Body of pancreas (tissue), 4 donors: ENCODE measurements at regions of chr12 and their contacts with region 1.

Region 1: DNA sequence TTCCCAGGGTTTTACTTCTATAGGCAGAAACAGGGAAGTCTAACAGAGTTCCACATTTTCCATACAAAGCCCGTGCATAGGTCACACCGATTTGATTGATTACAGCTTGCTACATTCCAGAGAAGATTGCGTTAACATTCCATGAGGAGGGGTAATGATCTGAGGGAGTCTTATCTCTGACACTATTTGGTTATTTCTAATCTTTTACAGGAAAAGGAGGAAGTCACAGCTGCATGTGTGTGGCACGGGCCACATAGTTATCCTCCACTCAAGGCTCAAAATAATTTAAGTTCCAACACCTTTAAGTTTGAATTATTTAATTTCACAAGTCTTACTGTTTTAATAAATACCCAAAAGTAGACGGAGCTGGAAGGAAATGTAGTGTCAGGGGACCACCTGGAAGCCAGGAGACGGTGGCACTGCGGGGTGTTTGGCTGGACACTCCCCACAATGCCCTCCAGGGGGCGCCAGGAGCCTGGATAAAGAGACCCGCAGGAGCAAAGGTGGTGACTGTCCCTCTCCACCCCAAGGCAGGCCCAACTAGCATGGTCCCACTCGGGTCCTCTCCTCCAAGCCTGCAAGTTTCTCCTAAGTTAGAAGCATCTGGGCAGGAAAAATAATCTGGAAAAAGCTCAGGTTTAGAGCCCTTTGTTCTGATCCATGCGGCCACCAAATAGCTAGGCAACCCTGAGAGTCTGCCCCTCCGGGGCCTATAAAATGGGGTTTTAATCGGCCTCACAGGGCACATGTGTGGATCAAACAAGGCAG is 20.2 kb downstream of the KRT8 start:
- DNase-seq: peak; percentile 84 to 90 (median 88)
- ATAC-seq: peak; percentile 87
- H3K4me3 ChIP-seq: no peak overlapping the region
- H3K27ac ChIP-seq: peak overlapping the region; percentile 56 to 84 (median 70)
- H3K4me1 ChIP-seq: peaks cover 26% of the 10 kb centered on the region
- H3K27me3 ChIP-seq: no peaks in the 10 kb centered on the region
- CTCF ChIP-seq: peak; percentile 86 to 99 (median 96)
- POLR2A ChIP-seq: peak in 1 of 3 donors; percentile 8

Region 2: GRCh38 chr12:52691076-52691840 is 193.5 kb before region 1 on chr12:
- intact Hi-C with region 1: no loop called
- DNase-seq: peak in 2 of 4 donors; percentile 21 to 31
- ATAC-seq: no peak
- H3K4me3 ChIP-seq: no peak overlapping the region
- H3K27ac ChIP-seq: no peak overlapping the region
- H3K4me1 ChIP-seq: peaks cover 7% of the 10 kb centered on the region
- H3K27me3 ChIP-seq: no peaks in the 10 kb centered on the region
- CTCF ChIP-seq: no peak
- POLR2A ChIP-seq: no peak

Region 3: DNA sequence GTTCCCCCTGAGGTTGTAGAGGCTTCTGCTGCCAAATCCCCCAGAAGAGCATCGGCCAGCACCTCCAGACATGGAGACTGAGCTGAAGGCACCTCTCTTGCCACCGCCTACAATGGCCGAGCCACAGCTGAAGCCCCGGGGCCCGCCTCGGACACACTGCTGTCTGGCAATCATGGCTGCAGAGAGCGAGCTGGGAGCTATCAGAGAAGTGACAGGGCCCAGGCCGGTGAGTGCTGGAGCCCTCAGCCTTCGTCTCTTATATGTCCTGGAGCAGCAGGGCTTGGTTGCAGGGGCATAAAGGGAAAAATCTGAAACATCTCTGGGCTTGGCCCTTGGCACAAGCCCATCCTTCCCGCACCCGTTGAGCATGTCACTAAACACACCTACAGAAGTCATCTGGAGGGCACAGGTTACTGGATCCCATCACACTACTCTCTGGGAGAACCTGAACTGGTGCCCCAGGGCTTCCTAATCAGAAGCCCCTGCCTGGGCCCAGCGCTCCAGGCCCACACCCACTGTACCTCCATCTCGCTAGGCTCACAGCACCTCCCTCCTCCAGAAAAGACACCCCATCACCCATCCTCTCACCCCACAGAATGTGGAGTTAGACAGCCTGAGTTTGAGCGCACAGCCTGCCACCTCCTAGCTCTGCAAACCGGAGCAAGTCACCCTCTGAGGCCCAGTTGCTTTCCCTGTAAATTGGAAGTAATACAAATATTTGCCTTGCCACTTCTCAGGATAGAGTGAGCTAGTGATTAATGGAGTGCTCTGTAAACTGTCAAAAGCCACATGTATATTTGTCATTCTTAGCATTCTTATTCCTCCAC is 70.6 kb before region 1 on chr12 and contains the start of gene KRT4:
- intact Hi-C with region 1: no loop called
- DNase-seq: no peak
- ATAC-seq: peak; percentile 58
- H3K4me3 ChIP-seq: no peak within 1 kb of the TSS
- H3K27ac ChIP-seq: no peak within 1 kb of the TSS
- H3K4me1 ChIP-seq: peaks cover 9% of the 10 kb centered on the region
- H3K27me3 ChIP-seq: no peaks in the 10 kb centered on the region
- CTCF ChIP-seq: no peak
- POLR2A ChIP-seq: no peak
- total RNA-seq, gene KRT4: 0.52 TPM in 1 of 2 donors, not detected in the other

Region 4: DNA sequence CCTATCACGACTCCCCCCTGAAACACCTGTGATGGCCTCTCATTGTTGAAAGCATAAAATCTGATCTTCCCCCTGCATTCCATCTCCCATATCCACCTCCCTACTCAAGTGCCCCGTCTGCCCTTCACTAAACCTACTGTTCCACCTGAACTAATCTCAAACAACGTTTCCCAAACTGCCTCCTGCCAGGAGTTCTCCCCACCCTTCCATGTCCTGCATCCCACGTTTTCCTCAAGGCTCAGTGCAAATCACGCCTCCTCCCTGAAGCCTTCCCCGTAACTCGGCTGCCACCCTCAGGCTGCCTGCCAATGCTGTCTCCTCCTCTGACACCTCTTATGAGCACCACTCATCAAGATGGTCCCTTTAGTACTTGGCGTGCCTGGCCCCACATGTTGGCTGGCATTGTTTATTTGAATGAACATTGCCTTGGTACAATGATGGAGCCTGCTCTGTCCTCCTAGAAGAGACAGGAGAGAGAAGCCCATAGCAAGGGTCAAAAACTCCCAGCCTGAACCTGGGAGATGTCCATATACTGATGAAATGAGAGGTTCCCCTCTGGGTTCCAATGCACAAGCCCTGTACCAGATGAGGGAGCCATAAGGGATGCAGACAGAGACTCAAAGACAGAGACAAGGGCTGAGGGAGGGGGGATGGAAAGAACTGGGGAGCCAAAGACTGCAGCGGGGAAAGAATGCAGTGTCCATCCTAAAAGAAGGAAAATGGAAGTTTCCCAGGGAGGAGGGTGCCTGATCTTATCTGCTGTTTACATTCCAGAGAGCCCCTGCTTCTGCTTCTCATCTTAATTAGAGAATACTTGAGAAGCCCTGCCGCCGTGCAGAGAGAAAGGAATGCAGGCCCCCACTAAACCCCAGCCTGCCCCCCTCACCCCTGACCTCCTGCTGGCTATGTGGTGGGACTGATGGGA is 91.7 kb after region 1 on chr12:
- intact Hi-C with region 1: loop called (anchors 5 kb)
- DNase-seq: peak in 1 of 4 donors; percentile 13
- ATAC-seq: no peak
- H3K4me3 ChIP-seq: no peak overlapping the region
- H3K27ac ChIP-seq: no peak overlapping the region
- H3K4me1 ChIP-seq: peaks cover 44% of the 10 kb centered on the region
- H3K27me3 ChIP-seq: no peaks in the 10 kb centered on the region
- CTCF ChIP-seq: peak in 1 of 7 experiments; percentile 13
- POLR2A ChIP-seq: no peak

Region 5: DNA sequence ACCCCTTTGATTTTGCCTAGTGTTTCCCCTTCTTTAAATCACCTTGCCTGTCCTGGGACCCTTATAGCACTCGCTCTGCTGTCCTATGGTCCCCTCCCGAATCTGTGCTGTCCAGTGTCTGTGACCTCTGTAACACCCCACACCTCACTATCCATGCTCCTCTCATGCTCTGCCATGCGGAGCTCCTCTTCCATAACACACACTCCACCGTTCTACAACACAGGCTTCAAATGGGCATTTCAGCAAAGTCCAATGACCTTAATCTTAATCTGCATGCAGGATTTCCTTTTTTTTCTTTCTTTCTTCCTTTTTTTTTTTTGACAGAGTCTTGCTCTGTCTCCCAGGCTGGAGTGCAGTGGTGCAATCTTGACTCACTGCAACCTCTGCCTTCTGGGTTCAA is 244.5 kb after region 1 on chr12:
- intact Hi-C with region 1: no loop called
- DNase-seq: no peak
- ATAC-seq: no peak
- H3K4me3 ChIP-seq: no peak overlapping the region
- H3K27ac ChIP-seq: no peak overlapping the region
- H3K4me1 ChIP-seq: no peaks in the 10 kb centered on the region
- H3K27me3 ChIP-seq: no peaks in the 10 kb centered on the region
- CTCF ChIP-seq: no peak
- POLR2A ChIP-seq: no peak